Heart right ventricle (tissue), 16 donors: ENCODE measurements at regions of chr11 and their contacts with region 1.

Region 1: GRCh38 chr11:72102946-72103753 is at the start of gene LAMTOR1:
- DNase-seq: peak; percentile 99 to 100
- ATAC-seq: peak; percentile 97 to 99 (median 99)
- H3K4me3 ChIP-seq: peak within 1 kb of the TSS; percentile 59 to 99 (median 80)
- H3K27ac ChIP-seq: peak within 1 kb of the TSS; percentile 79 to 99 (median 96)
- H3K4me1 ChIP-seq: peaks cover 6 to 51% (median 38%) of the 10 kb centered on the region in 9 donors
- H3K27me3 ChIP-seq: no peaks in the 10 kb centered on the region
- CTCF ChIP-seq: peak; percentile 11 to 56 (median 39)
- total RNA-seq, gene LAMTOR1: 76.5 to 103 (median 81.8) TPM

Region 2: GRCh38 chr11:72174299-72175070 is 71.3 kb after region 1 on chr11:
- intact Hi-C with region 1: no loop called
- DNase-seq: no peak
- ATAC-seq: peak in 1 of 8 donors; percentile 37
- H3K4me3 ChIP-seq: no peak overlapping the region
- H3K27ac ChIP-seq: no peak overlapping the region
- H3K4me1 ChIP-seq: no peaks in the 10 kb centered on the region
- H3K27me3 ChIP-seq: peaks cover 0 to 6% (median 0%) of the 10 kb centered on the region in 7 donors
- CTCF ChIP-seq: no peak

Region 3: DNA sequence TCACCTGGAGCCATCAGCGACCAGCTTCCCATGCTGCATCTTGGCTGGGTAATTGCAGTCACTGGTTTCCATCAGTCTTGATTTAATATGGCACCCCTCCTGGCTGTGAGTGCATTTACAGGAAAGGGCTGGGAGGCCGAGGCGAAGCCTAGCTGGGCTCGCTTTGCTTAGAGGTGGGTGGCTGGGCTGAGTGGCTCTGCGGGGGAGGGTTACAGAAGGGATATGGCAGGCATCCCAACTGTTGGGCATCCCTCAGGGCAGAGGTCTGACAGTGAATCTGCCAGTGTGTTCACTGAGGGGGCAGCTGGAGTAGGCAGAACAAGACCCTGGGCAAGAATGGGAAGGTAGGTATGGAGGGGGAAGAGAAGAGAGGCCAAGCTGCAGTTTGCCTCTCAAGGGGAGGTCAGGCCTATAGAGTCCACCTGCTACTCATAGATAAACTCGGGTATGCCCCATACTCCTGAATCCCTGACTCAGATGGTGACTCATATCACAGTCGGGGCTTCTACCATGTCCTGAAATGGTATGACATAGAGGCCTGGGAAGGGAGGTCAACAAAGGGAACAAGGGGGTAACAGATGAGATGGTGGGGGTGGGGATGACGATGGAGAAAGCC is 218.3 kb after region 1 on chr11:
- intact Hi-C with region 1: no loop called
- DNase-seq: no peak
- ATAC-seq: no peak
- H3K4me3 ChIP-seq: no peak overlapping the region
- H3K27ac ChIP-seq: no peak overlapping the region
- H3K4me1 ChIP-seq: peaks cover 0 to 21% (median 8%) of the 10 kb centered on the region in 9 donors
- H3K27me3 ChIP-seq: no peaks in the 10 kb centered on the region
- CTCF ChIP-seq: no peak

Region 4: DNA sequence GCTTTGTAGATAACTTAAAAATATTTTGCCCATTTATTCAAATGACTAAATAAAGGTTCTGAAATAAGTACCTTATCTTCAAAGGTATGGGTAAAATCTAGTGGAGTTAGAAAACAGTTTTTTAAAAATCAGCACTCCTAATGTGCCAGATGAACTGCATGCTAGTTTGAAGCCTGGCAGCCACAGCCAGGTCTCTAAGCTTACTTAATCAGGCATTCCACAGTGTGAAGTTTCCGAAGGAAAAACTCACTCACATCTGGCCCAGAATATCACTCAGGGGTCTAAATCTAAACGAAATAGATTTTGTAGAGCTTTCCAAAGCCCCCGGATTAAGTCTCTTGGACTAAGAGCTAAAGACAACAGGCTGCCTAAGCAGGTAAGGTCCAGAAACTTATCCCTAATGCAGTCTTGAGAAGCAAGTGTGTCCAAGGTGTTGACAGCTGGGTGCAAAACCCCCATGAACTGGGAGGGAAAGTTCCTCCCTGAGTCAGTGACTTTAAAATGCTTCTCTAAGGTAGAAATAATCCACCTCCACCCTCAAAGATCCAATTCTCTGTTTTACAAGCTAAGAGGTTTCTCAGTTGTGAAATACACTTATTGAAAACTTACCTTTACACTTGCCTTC is 881.4 kb after region 1 on chr11:
- intact Hi-C with region 1: loop called in 1 of 10 experiments (anchors 5 kb)
- DNase-seq: no peak
- ATAC-seq: peak in 1 of 8 donors; percentile 49
- H3K4me3 ChIP-seq: no peak overlapping the region
- H3K27ac ChIP-seq: peak overlapping the region in 3 of 10 donors; percentile 17 to 61 (median 49)
- H3K4me1 ChIP-seq: peaks cover 3 to 66% (median 24%) of the 10 kb centered on the region in 9 donors
- H3K27me3 ChIP-seq: no peaks in the 10 kb centered on the region
- CTCF ChIP-seq: no peak